ENCODE measurements at regions of chr10 and their contacts with region 1.

Region 1: DNA sequence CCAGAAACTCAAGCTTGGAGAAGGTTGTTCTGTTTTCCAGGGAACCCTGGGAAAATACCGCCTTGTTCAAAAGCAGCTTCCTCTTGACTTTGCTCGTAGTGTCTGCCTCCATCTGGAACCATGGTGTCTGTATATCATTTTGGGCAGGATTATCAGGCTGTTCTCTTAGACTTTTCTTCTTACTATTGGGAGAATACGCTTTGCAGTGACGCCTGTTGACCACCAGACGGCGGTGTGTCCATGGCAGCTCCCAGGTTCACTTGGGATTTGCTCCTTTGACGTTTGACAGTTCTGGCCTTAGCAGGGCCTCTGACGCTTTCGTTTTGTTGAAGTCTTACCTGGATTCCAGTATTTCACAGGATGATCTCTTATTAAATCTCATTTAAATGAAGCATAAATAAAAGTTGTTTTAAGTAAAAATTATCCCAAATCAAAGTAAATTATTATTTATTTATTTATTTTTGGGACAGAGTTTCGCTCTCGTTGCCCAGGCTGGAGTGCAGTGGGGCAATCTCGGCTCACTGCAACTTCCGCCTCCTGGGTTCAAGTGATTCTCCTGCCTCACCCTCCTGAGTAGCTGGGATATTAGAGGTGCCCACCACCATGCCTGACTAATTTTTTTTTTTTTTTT is 41.8 kb upstream of the GJD4 start:
- DNase-seq: peak; percentile 61
- H3K4me3 Mint-ChIP-seq: no peak overlapping the region
- H3K27ac Mint-ChIP-seq: no peak overlapping the region
- H3K4me1 Mint-ChIP-seq: peaks cover 2% of the 10 kb centered on the region
- H3K27me3 Mint-ChIP-seq: no peaks in the 10 kb centered on the region

Region 2: GRCh38 chr10:35304649-35305048 is 258.7 kb before region 1 on chr10:
- CTCF ChIA-PET with region 1: interaction called, 3 read pairs
- intact Hi-C with region 1: loop called (anchors 1 kb)
- DNase-seq: no peak
- H3K4me3 Mint-ChIP-seq: no peak overlapping the region
- H3K27ac Mint-ChIP-seq: no peak overlapping the region
- H3K4me1 Mint-ChIP-seq: no peaks in the 10 kb centered on the region
- H3K27me3 Mint-ChIP-seq: peaks cover 16% of the 10 kb centered on the region

Region 3: DNA sequence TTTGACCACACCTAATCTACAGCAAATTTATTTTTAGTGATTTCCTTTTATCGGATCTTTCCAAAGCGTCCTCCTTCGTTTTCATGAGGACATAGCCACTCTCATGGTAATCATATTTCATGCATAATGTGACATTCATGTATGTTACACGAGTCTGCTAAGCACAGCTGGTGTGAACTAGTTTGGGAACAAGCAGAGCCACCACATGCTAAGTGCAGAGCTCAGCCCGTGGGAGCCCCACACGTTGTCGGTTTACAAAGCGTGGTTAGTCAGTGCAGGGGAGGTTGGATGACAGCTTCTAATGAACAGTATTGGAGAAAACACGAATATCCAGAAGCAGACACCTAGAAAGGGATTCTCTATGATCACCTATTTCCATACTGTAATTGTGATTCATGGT is 36.6 kb before region 1 on chr10:
- CTCF ChIA-PET with region 1: no interaction called
- intact Hi-C with region 1: no loop called
- DNase-seq: no peak
- H3K4me3 Mint-ChIP-seq: no peak overlapping the region
- H3K27ac Mint-ChIP-seq: no peak overlapping the region
- H3K4me1 Mint-ChIP-seq: no peaks in the 10 kb centered on the region
- H3K27me3 Mint-ChIP-seq: no peaks in the 10 kb centered on the region